ENCODE measurements at regions of chr11 and their contacts with region 1.

Region 1: GRCh38 chr11:7688238-7688826 is 15.0 kb upstream of the CYB5R2 start:
- DNase-seq: no peak
- H3K4me3 Mint-ChIP-seq: no peak overlapping the region
- H3K27ac Mint-ChIP-seq: no peak overlapping the region
- H3K4me1 Mint-ChIP-seq: no peaks in the 10 kb centered on the region
- H3K27me3 Mint-ChIP-seq: peaks cover 37% of the 10 kb centered on the region

Region 2: DNA sequence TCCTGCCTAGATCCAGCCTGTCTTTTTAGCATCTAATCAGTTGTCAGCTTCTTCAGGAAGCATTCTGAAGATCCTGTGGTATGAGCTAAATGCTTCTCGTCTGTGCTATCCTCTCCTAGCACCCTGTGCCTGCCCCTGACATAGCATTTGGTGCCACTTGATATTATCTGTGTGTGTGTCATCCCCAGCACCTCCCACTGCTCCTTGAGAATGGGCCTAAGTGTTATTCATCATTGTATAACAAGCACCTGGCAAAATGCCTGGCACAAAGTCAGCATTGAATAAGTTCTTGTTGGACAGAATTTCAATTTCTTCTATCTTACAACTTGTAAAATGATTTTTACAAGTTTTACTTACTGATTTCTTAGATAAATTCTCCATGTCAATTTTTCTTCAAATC is 231.1 kb before region 1 on chr11:
- CTCF ChIA-PET with region 1: no interaction called
- POLR2A ChIA-PET with region 1: no interaction called
- DNase-seq: no peak
- H3K4me3 Mint-ChIP-seq: no peak overlapping the region
- H3K27ac Mint-ChIP-seq: no peak overlapping the region
- H3K4me1 Mint-ChIP-seq: no peaks in the 10 kb centered on the region
- H3K27me3 Mint-ChIP-seq: peaks cover 3% of the 10 kb centered on the region

Region 3: DNA sequence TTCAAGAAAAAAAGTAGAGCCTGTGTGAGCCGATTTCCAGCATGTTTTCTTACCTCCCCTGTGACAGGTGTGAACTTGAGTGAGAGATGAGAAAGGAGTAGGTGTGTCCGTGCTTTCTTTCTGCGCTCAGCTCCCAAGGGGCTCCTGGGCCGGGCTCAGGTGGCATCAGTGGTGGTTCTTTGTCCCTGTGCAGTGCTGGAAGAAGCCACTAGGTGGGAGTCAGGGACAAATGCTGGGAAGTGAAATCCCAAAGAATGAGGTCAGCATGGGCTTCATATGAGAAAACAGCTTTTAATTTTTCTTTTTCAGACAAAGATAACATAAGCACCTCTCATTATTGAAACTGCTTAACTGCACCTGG is 116.7 kb before region 1 on chr11:
- CTCF ChIA-PET with region 1: no interaction called
- POLR2A ChIA-PET with region 1: no interaction called
- DNase-seq: peak; percentile 31
- H3K4me3 Mint-ChIP-seq: no peak overlapping the region
- H3K27ac Mint-ChIP-seq: no peak overlapping the region
- H3K4me1 Mint-ChIP-seq: peaks cover 24% of the 10 kb centered on the region
- H3K27me3 Mint-ChIP-seq: peaks cover 13% of the 10 kb centered on the region

Region 4: GRCh38 chr11:7637447-7638157 is 50.7 kb before region 1 on chr11:
- CTCF ChIA-PET with region 1: no interaction called
- POLR2A ChIA-PET with region 1: no interaction called
- DNase-seq: no peak
- H3K4me3 Mint-ChIP-seq: no peak overlapping the region
- H3K27ac Mint-ChIP-seq: no peak overlapping the region
- H3K4me1 Mint-ChIP-seq: peaks cover 2% of the 10 kb centered on the region
- H3K27me3 Mint-ChIP-seq: no peaks in the 10 kb centered on the region

Region 5: GRCh38 chr11:7665473-7666291 is 22.6 kb before region 1 on chr11:
- CTCF ChIA-PET with region 1: interaction called, 14 read pairs
- POLR2A ChIA-PET with region 1: no interaction called
- DNase-seq: peak; percentile 79
- H3K4me3 Mint-ChIP-seq: no peak overlapping the region
- H3K27ac Mint-ChIP-seq: no peak overlapping the region
- H3K4me1 Mint-ChIP-seq: peaks cover 3% of the 10 kb centered on the region
- H3K27me3 Mint-ChIP-seq: no peaks in the 10 kb centered on the region

Region 6: GRCh38 chr11:7703740-7704139 is 15.4 kb after region 1 on chr11:
- CTCF ChIA-PET with region 1: no interaction called
- POLR2A ChIA-PET with region 1: no interaction called
- DNase-seq: no peak
- H3K4me3 Mint-ChIP-seq: no peak overlapping the region
- H3K27ac Mint-ChIP-seq: no peak overlapping the region
- H3K4me1 Mint-ChIP-seq: no peaks in the 10 kb centered on the region
- H3K27me3 Mint-ChIP-seq: peaks cover 30% of the 10 kb centered on the region